WTC11 (cell line): ENCODE measurements at regions of chr16 and their contacts with region 1.

Region 1: GRCh38 chr16:71311553-71312158 is 22.5 kb upstream of the CMTR2 start:
- DNase-seq: peak; percentile 62
- ATAC-seq: peak; percentile 85
- H3K4me3 Mint-ChIP-seq: no peak overlapping the region
- H3K27ac Mint-ChIP-seq: no peak overlapping the region
- H3K4me1 Mint-ChIP-seq: peaks cover 9% of the 10 kb centered on the region
- H3K27me3 Mint-ChIP-seq: peaks cover 6% of the 10 kb centered on the region
- CTCF ChIP-seq: peak; percentile 84

Region 2: GRCh38 chr16:71242601-71243000 is 69.1 kb before region 1 on chr16:
- CTCF ChIA-PET with region 1: interaction called, 11 read pairs
- POLR2A ChIA-PET with region 1: no interaction called
- DNase-seq: no peak
- ATAC-seq: no peak
- H3K4me3 Mint-ChIP-seq: no peak overlapping the region
- H3K27ac Mint-ChIP-seq: no peak overlapping the region
- H3K4me1 Mint-ChIP-seq: peaks cover 8% of the 10 kb centered on the region
- H3K27me3 Mint-ChIP-seq: peaks cover 8% of the 10 kb centered on the region
- CTCF ChIP-seq: no peak

Region 3: DNA sequence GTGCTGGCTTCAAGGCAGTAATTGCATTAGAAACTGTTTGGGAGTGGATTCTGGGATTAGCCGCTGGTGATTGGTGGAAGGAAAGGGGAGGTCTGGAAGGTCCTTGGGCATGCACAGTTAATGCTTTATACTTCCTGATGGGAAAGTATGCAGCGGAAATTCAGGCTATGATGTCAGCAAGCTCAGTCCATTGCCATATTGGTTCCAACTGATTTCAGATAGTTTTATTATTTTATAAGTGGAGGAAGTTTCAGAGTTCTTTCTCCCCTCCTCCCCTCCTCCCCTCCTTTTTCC is 14.4 kb before region 1 on chr16:
- CTCF ChIA-PET with region 1: interaction called, 12 read pairs
- POLR2A ChIA-PET with region 1: interaction called, 5 read pairs
- DNase-seq: no peak
- ATAC-seq: no peak
- H3K4me3 Mint-ChIP-seq: no peak overlapping the region
- H3K27ac Mint-ChIP-seq: no peak overlapping the region
- H3K4me1 Mint-ChIP-seq: no peaks in the 10 kb centered on the region
- H3K27me3 Mint-ChIP-seq: peaks cover 20% of the 10 kb centered on the region
- CTCF ChIP-seq: no peak

Region 4: GRCh38 chr16:71344315-71344905 is 32.8 kb after region 1 on chr16:
- CTCF ChIA-PET with region 1: interaction called, 15 read pairs
- POLR2A ChIA-PET with region 1: no interaction called
- DNase-seq: no peak
- ATAC-seq: 0 out of 2 replicates have a peak, but pooled peaks have one; percentile 22
- H3K4me3 Mint-ChIP-seq: no peak overlapping the region
- H3K27ac Mint-ChIP-seq: no peak overlapping the region
- H3K4me1 Mint-ChIP-seq: peaks cover 10% of the 10 kb centered on the region
- H3K27me3 Mint-ChIP-seq: no peaks in the 10 kb centered on the region; the same call in 1 of the 2 replicates
- CTCF ChIP-seq: no peak

Region 5: DNA sequence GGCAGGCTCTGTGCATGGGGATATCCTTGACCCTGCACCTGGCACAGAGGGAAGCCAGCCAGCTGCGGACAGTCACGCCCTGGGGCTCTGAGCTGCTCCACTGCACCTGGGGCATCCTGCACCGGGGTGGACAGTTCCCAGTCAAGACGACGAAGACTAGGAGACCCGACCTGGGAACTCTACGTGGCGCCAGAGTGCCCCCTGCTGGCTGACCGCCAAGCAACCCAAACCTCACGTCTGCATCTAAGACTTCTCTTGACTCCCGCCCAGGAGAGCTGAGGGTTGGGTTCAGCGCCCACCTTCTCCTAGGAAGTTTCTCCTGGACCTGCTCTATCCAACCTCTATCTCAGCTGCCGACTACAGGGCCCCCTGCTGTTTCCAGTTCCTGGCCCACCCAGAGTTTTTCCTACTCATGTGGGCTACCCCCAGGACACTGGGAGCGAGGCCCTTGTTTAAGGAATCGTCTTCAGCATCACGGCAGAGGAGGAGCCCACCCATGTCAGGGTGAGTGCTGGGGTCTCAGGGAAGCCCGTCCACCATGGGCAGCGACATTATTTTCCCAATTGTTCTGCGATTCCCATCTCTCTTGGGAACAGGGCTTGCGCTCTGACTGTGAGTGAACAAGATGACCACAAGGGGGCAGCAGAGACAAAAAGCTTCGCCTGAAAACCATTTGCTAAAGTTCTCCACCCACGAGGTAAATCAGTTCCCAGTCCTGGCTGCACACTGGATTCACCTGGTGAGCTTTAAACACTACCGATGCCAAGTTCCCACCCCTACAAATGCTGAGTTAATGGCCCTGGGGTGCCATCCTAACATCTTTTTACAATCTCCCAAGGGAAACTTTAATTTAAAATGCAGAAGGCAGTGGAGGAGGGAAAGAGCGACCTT is 100.9 kb after region 1 on chr16:
- CTCF ChIA-PET with region 1: interaction called, 23 read pairs
- POLR2A ChIA-PET with region 1: no interaction called
- DNase-seq: peak; percentile 87
- ATAC-seq: peak; percentile 90
- H3K4me3 Mint-ChIP-seq: peak overlapping the region; percentile 70
- H3K27ac Mint-ChIP-seq: no peak overlapping the region
- H3K4me1 Mint-ChIP-seq: peaks cover 8% of the 10 kb centered on the region
- H3K27me3 Mint-ChIP-seq: peaks cover 7% of the 10 kb centered on the region
- CTCF ChIP-seq: peak; percentile 87

Region 6: DNA sequence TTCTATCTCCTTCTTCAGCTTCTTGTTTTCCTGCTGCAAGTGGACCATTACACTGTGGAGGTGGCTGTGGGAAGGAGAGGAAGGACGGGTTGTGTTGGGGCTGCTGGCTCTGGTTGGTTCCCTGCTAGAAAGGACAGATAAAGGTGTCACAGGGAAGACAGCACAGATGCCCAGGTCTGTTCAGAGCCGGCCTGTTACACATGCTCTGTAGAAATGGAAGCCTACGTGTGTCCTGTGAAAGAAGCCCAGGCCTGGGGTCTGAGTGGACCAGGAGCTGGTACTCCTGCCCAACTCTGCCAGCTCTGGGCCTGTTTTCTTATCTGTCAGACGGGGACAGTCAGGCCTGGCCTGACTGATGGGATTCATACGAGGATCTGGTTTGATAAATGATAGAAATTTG is 808.4 kb after region 1 on chr16:
- CTCF ChIA-PET with region 1: no interaction called
- POLR2A ChIA-PET with region 1: no interaction called
- DNase-seq: no peak
- ATAC-seq: no peak
- H3K4me3 Mint-ChIP-seq: no peak overlapping the region
- H3K27ac Mint-ChIP-seq: no peak overlapping the region
- H3K4me1 Mint-ChIP-seq: peaks cover 1% of the 10 kb centered on the region
- H3K27me3 Mint-ChIP-seq: no peaks in the 10 kb centered on the region
- CTCF ChIP-seq: no peak